ENCODE measurements at regions of chr1 and their contacts with region 1.

Region 1: DNA sequence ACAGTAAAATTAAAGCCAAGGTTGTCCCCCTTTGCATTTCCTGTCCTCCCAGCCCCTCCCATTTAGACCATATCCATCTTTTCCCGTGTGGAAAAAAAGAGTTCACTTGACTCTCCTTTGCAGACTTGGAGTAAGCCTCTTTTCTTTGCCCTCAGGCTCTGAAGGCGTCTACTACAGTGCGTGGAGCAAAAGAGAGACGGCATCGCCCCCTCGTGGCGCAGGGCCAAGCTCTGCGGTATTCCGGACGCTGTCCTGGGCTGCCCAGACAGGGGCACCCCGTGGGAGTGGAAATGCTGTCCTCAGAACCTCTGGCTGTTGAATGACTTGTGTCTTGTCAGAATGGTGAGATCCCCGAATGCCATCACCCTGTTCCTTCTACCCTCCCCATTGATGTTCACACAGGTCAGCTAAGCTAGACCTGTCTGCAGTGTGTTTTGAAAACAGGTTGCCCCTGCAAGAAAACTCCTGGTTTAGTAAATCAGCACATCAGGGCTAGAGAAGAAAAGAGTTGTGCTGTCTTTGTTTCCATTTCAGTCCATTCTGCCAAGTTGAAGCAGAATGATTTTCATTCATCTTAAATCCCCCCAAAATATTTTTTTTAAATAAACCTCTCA is 12.3 kb upstream of the GJA8 start:
- DNase-seq: peak; percentile 30
- ATAC-seq: peak; percentile 99
- H3K4me3 ChIP-seq: no peak overlapping the region
- H3K27ac ChIP-seq: no peak overlapping the region
- H3K4me1 ChIP-seq: no peaks in the 10 kb centered on the region
- H3K27me3 ChIP-seq: no peaks in the 10 kb centered on the region
- CTCF ChIP-seq: peak; percentile 94
- EP300 ChIP-seq: no peak
- POLR2A ChIP-seq: no peak
- RAD21 ChIP-seq: peak; percentile 86

Region 2: DNA sequence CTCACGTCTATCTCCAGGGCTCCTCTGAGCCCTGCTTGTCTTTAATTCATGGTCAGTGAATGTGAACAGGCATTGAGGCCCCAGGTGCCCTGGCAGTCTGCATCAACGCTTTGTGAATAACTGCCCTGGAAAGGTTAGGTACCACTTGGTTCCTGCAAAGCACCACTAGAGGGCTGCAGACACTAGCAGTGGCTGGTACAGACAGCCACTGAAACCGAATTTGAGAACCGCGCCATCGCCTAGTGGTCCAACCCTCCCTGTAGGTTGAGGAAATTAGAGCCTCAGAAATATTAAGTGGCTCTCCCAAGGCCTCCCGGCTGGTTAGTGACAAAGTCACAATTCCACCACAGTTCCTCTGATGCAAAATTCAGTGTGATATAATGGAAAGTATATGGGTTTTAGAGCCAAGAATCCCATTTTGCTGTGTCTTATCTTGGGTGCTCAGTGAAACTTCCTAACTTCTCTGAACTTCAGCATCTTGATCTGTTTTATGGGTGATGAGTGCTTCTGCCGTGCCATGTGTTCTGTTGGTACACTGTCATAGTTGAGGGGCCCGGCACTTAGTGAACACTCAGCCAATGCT is 395.2 kb before region 1 on chr1:
- CTCF ChIA-PET with region 1: interaction called, 5 read pairs
- POLR2A ChIA-PET with region 1: no interaction called
- in situ Hi-C with region 1: loop called (anchors 10 kb)
- intact Hi-C with region 1: loop called (anchors 10 kb)
- DNase-seq: peak; percentile 55
- ATAC-seq: peak; percentile 97
- H3K4me3 ChIP-seq: no peak overlapping the region
- H3K27ac ChIP-seq: no peak overlapping the region
- H3K4me1 ChIP-seq: no peaks in the 10 kb centered on the region
- H3K27me3 ChIP-seq: no peaks in the 10 kb centered on the region
- CTCF ChIP-seq: peak; percentile 91
- EP300 ChIP-seq: no peak
- POLR2A ChIP-seq: no peak
- RAD21 ChIP-seq: peak; percentile 77

Region 3: GRCh38 chr1:147723691-147724323 is 166.5 kb before region 1 on chr1:
- CTCF ChIA-PET with region 1: interaction called, 29 read pairs
- POLR2A ChIA-PET with region 1: interaction called, 3 read pairs
- in situ Hi-C with region 1: loop called (anchors 5 kb)
- intact Hi-C with region 1: no loop called
- DNase-seq: peak; percentile 51
- ATAC-seq: peak; percentile 95
- H3K4me3 ChIP-seq: no peak overlapping the region
- H3K27ac ChIP-seq: no peak overlapping the region
- H3K4me1 ChIP-seq: peaks cover 11% of the 10 kb centered on the region
- H3K27me3 ChIP-seq: 0 out of 5 replicates have a peak, but pooled peaks cover 0 to 6% of the 10 kb centered on the region in 2 experiments
- CTCF ChIP-seq: peak; percentile 86
- EP300 ChIP-seq: no peak
- POLR2A ChIP-seq: no peak
- RAD21 ChIP-seq: peak; percentile 80

Region 4: DNA sequence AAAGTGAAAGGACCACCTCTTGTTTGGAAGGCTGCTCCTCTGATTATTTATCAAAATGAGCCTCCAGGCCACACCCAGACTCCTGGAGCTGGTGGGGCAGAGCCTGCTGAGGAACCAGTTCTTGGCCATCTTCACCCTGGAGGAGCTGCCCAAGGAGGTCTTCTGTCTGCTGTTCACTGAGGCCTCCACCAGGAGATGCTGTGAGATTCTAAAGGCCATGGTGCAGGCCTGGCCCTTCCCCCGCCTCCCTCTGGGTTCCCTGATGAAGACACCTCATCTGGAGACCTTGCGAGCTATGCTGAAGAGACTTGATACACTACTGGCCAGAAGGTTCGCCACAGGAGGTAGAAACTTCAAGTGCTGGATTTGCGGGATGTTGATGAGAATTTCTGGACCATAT is 49.4 kb before region 1 on chr1:
- CTCF ChIA-PET with region 1: interaction called, 14 read pairs
- POLR2A ChIA-PET with region 1: no interaction called
- in situ Hi-C with region 1: no loop called
- intact Hi-C with region 1: loop called (anchors 2 kb)
- DNase-seq: no peak
- ATAC-seq: peak; percentile 51; the same call in 2 of the 3 replicates
- H3K4me3 ChIP-seq: no peak overlapping the region
- H3K27ac ChIP-seq: no peak overlapping the region
- H3K4me1 ChIP-seq: no peaks in the 10 kb centered on the region
- H3K27me3 ChIP-seq: 0 out of 5 replicates have a peak, but pooled peaks cover 0 to 1% of the 10 kb centered on the region in 2 experiments
- CTCF ChIP-seq: peak; percentile 51
- EP300 ChIP-seq: no peak
- POLR2A ChIP-seq: no peak
- RAD21 ChIP-seq: peak; percentile 42; the same call in 1 of the 2 replicates